MCF 10A (cell line): ENCODE measurements at regions of chr1 and their contacts with region 1.

Region 1: GRCh38 chr1:16351994-16352841 is at the start of gene FBXO42:
- DNase-seq: peak; percentile 89
- H3K4me3 Mint-ChIP-seq: peak within 1 kb of the TSS; percentile 87
- H3K27ac Mint-ChIP-seq: peak within 1 kb of the TSS; percentile 84
- H3K4me1 Mint-ChIP-seq: peaks cover 16% of the 10 kb centered on the region
- H3K27me3 Mint-ChIP-seq: no peaks in the 10 kb centered on the region
- CTCF ChIP-seq: peak; percentile 29
- total RNA-seq, gene FBXO42: 21.9 and 24.9 TPM in 2 replicates

Region 2: DNA sequence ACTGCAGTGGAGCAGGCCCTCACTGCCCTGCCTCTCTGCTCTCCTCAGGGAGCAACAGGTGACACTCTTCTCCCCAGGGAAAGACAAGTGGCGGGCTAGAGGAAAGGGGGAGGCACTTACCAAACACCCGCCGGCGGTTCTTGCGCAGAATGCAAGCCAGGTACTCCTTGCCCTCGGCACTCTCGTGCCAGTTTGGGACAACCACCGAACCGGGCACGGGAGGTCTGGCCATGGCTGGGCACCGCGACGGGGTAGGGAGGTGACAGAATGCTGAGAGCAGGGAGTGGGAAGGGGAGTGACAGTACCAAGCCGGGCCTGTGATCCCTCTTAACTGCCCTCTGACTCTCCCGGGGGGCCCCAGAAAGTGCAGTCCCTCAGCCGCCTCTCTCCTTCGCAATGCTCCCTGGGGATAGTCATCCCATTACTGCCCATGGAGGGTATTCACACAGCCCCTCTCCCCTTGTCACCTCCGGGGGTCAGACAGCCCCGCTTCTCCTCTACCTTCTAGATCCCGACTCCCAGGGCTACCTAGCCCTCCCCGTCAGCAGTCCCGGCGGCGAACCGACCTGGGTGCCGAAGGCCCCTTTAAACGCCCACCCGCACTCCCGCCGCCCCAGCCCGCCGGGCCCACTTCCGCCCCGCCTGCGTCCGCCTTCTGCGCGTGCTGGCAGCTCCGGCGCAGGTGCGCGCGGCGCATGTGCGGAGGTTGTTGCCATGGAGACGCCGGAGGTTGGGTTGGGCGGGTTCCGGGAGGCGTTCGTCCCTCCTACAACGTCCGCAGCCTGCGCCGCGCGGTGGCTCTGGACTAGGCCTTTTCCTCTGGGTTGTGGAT is 115.5 kb before region 1 on chr1 and contains the start of gene CPLANE2:
- CTCF ChIA-PET with region 1: no interaction called
- POLR2A ChIA-PET with region 1: interaction called, 14 read pairs
- intact Hi-C with region 1: no loop called
- DNase-seq: peak; percentile 89
- H3K4me3 Mint-ChIP-seq: peak within 1 kb of the TSS; percentile 82
- H3K27ac Mint-ChIP-seq: peak within 1 kb of the TSS; percentile 87
- H3K4me1 Mint-ChIP-seq: peaks cover 11% of the 10 kb centered on the region
- H3K27me3 Mint-ChIP-seq: no peaks in the 10 kb centered on the region
- CTCF ChIP-seq: no peak
- total RNA-seq, gene CPLANE2: 8.3 and 13.2 TPM in 2 replicates

Region 3: GRCh38 chr1:16293538-16293937 is 58.7 kb before region 1 on chr1:
- CTCF ChIA-PET with region 1: interaction called, 3 read pairs
- POLR2A ChIA-PET with region 1: interaction called, 12 read pairs
- intact Hi-C with region 1: loop called (anchors 5 kb)
- DNase-seq: no peak
- H3K4me3 Mint-ChIP-seq: no peak overlapping the region
- H3K27ac Mint-ChIP-seq: peak overlapping the region; percentile 39
- H3K4me1 Mint-ChIP-seq: no peaks in the 10 kb centered on the region
- H3K27me3 Mint-ChIP-seq: no peaks in the 10 kb centered on the region
- CTCF ChIP-seq: no peak

Region 4: GRCh38 chr1:16321176-16321867 is 30.9 kb before region 1 on chr1:
- CTCF ChIA-PET with region 1: no interaction called
- POLR2A ChIA-PET with region 1: interaction called, 26 read pairs
- intact Hi-C with region 1: no loop called
- DNase-seq: peak; percentile 79
- H3K4me3 Mint-ChIP-seq: no peak overlapping the region
- H3K27ac Mint-ChIP-seq: peak overlapping the region; percentile 38
- H3K4me1 Mint-ChIP-seq: peaks cover 18% of the 10 kb centered on the region
- H3K27me3 Mint-ChIP-seq: no peaks in the 10 kb centered on the region
- CTCF ChIP-seq: no peak

Region 5: DNA sequence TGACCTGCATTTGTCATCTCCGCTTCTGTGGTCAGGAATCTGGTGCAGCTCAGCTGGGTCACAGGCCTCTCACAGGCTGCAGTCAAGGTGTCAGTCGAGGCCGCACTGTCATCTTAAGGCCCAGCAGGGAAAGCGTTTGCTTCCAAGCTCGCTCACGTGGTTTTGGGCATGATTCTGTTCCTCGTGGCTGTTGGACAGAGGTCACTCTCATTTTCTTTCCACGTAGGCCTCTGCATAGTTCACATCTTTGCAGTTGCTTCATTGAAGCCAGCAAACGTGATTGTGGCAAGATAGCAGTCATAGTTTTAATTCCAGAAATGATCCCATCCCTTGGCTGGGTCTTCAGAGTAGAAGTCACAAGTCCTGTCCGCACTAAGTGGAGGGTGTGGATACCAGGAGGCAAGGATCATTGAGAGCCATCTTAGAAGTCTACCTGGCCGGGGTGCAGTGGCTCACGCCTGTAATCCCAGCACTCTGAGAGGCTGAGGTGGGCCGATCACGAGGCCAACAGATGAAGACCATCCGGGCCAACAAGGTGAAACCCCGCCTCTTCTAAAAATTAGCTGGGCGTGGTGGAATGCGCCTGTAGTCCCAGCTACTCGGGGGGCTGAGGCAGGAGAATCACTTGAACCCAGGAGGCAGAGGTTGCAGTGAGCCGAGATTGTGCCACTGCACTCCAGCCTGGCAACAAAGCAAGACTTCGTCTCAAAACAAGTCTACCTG is 112.8 kb after region 1 on chr1:
- CTCF ChIA-PET with region 1: no interaction called
- POLR2A ChIA-PET with region 1: no interaction called
- intact Hi-C with region 1: no loop called
- DNase-seq: no peak
- H3K4me3 Mint-ChIP-seq: no peak overlapping the region
- H3K27ac Mint-ChIP-seq: no peak overlapping the region
- H3K4me1 Mint-ChIP-seq: no peaks in the 10 kb centered on the region
- H3K27me3 Mint-ChIP-seq: no peaks in the 10 kb centered on the region
- CTCF ChIP-seq: no peak